ENCODE measurements at regions of chr1 and their contacts with region 1.

Region 1: GRCh38 chr1:869499-870244 is 54.1 kb upstream of the SAMD11 start:
- DNase-seq: peak in 1 of 2 experiments; percentile 77
- H3K4me3 ChIP-seq: no peak overlapping the region; the same call in 1 of the 2 replicates
- H3K27ac ChIP-seq: no peak overlapping the region
- H3K4me1 ChIP-seq: no peaks in the 10 kb centered on the region; the same call in 1 of the 2 replicates
- H3K27me3 ChIP-seq: no peaks in the 10 kb centered on the region
- CTCF ChIP-seq: peak; percentile 70

Region 2: GRCh38 chr1:844472-845026 is 25.1 kb before region 1 on chr1:
- CTCF ChIA-PET with region 1: no interaction called
- POLR2A ChIA-PET with region 1: no interaction called
- intact Hi-C with region 1: no loop called
- DNase-seq: no peak
- H3K4me3 ChIP-seq: no peak overlapping the region
- H3K27ac ChIP-seq: no peak overlapping the region
- H3K4me1 ChIP-seq: peaks cover 6% of the 10 kb centered on the region; the same call in 1 of the 2 replicates
- H3K27me3 ChIP-seq: no peaks in the 10 kb centered on the region
- CTCF ChIP-seq: no peak

Region 3: DNA sequence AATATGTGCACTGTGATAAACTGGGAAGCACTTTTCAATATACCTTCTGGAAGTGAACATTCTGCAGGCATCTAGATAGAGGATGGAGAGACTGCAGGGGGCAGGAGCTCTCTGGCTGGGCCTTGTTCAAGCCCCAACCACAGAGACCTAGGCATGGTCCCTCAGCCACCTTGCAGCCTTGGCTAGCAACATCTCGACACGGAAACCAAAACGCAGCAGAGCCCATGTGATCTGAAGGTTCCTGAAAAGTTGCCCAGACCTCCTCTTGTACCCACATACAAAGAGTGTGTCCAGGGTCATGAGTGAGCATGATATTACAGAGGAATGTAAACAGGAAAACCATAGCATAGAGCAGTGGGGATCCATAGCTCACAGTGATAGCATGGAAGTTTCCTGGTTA is 21.0 kb after region 1 on chr1:
- CTCF ChIA-PET with region 1: no interaction called
- POLR2A ChIA-PET with region 1: no interaction called
- intact Hi-C with region 1: no loop called
- DNase-seq: no peak
- H3K4me3 ChIP-seq: no peak overlapping the region
- H3K27ac ChIP-seq: no peak overlapping the region
- H3K4me1 ChIP-seq: no peaks in the 10 kb centered on the region
- H3K27me3 ChIP-seq: peaks cover 31% of the 10 kb centered on the region
- CTCF ChIP-seq: no peak

Region 4: DNA sequence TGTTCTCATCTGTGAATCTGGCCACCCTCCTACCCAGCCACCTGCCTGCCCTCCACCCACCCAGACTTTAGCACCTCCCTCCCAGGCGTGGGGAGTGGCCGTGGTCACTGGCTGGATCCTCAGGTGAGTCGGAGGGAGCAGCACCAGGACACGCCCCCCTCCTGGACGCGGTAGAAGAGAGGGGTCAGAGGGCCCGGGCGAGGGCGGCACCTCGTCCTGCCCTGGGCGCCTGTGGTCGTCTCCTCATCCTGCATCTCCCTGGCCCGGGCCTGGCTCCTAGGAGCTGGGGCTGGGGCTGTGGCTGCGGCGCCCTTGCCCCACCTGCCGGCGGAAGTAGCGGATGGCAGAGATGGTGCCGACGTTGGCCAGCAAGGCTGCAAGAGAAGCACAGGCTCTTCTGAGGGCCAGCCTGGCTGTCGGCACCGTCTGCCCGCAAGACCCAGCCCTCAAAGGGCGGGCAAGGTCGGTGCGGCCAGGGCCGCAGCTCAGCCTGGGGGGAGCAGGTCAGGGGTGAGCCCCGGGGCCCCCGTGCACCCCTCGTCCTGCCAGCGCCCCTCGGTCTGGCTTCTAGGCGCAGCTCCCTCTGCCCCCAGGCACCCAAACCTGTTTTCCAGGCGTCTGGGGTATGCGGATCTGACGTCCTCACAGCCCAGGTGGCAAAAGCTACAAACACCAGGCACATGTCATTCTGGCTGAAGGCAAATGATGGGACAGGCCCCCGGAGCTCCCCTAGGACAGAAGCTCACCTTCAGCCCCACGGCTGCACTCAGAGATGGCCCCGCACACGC is 106.4 kb after region 1 on chr1:
- CTCF ChIA-PET with region 1: no interaction called
- POLR2A ChIA-PET with region 1: no interaction called
- intact Hi-C with region 1: loop called (anchors 1 kb)
- DNase-seq: peak; percentile 89
- H3K4me3 ChIP-seq: peak overlapping the region; percentile 62; the same call in 1 of the 2 replicates
- H3K27ac ChIP-seq: peak overlapping the region; percentile 59
- H3K4me1 ChIP-seq: peaks cover 13% of the 10 kb centered on the region
- H3K27me3 ChIP-seq: no peaks in the 10 kb centered on the region
- CTCF ChIP-seq: peak; percentile 83